Left cardiac atrium (tissue), 4 donors: ENCODE measurements at regions of chr6 and their contacts with region 1.

Region 1: DNA sequence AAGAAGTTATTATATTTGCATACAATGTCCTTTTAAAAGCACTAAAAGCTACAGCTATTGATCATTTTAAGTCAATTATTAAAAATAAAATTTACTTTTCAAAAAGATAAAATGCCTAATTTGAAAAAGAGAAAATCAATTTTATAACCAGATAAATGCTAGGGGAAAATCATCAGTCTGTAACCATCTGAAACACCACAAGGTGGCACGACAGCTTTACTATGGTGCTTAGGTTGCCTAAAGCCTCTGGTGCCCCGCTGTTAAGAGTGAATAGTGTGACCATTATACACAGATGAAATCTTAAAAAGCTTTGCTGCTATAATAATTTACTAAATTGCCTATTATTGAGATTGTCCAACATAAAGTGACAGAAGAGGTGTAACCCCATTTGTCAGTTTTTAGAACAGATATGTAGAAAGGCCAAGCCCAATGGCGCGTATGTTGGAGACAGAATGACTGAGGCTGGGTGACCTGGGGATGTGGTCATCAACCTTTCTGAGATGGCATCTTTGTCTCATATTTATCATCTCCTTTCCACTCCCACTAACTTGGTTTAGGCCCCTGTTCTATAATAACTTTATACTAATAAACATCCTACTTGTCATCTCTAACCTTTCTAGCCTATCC is 100.8 kb downstream of the MOXD1 start:
- DNase-seq: peak; percentile 28
- ATAC-seq: peak; percentile 74 to 78

Region 2: DNA sequence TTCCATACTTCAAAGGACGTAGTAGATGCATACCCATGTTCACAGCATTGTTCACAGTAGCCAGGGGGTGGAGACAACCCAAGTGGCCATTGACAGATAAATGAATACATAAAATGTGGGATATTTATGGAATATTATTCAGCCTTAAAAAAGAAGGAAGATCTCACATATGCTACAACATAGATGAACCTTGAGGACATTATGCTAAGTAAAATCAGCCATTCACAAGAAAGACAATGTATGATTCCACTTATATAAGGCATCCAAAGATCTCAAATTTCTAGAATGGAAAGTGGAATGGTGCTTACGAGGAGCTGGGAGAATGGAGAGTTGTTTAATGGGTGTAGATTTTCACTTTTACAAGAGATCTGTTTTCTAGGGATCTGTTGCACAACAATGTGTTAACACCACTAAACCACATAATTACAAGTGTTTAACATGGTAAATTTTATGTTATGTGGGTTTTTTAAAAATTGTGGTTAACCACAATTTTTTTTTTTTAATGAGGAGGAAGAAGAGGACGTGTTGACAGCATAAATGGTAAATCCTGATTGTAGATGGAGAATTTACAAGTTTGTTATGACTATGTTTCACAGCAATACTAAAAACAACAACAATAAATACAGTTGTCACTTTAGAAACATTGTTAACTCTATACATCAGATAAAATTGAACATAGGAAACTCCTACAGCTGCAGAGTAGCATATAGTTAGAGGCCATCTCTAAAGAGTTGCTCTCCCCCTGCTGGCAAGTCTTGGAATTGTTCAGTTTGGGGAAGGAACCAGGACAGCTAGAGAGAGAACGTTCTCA is 390.8 kb before region 1 on chr6:
- intact Hi-C with region 1: loop called in 1 of 2 experiments (anchors 10 kb)
- DNase-seq: peak; percentile 63
- ATAC-seq: peak; percentile 77 to 79

Region 3: DNA sequence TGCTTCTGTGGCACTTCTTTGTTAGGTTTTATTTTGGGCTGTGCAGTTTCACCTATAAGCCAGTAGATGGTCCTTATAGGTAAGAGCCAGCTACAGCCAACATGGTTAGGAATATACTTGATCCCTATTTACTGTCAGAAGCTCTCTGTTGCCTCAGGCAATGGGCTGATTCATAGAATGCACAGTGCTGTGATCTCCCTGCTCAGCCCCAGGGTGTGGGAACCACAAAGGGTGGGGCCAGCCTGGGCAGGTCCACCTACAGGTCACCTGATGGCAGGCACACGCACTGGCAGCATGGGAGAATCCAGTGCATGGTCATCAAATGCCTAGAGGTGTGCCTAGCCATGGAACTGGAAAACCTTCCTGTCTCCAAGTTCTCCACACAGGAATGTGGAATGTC is 91.1 kb before region 1 on chr6:
- intact Hi-C with region 1: no loop called
- DNase-seq: no peak
- ATAC-seq: no peak

Region 4: DNA sequence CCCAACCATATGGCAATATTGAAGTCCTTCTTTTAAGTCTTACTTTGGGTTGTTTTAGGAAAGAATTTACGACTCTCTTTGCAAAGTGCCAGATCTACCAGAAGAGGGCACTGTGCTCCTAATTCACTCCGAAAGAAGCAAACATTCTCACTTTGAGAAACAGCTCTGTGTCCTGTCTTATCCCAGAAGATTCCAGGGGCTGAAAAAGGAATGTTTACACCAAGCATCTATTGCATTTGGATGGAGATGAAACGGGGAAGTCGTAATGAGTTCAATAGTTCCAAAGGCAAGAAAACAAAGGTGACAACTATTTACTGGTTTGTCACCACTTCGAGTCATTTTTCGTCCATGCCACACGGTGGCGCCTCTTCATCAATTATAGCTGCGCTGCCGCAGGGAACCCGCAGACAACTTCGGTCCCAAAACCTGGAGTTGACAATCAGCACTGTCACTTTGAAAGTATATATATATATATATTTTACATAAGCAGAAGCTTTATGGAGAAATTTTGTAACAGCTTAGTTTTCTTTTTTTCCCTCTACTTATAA is 20.8 kb before region 1 on chr6:
- intact Hi-C with region 1: loop called in 1 of 2 experiments (anchors 2 kb)
- DNase-seq: peak; percentile 71
- ATAC-seq: peak; percentile 72 to 82

Region 5: GRCh38 chr6:132456700-132457143 is 156.3 kb after region 1 on chr6:
- intact Hi-C with region 1: loop called in 1 of 2 experiments (anchors 10 kb)
- DNase-seq: peak; percentile 58
- ATAC-seq: peak; percentile 90 to 95

Region 6: GRCh38 chr6:132483779-132484679 is 183.6 kb after region 1 on chr6:
- intact Hi-C with region 1: loop called (anchors 2 to 5 kb)
- DNase-seq: no peak
- ATAC-seq: peak; percentile 65 to 79

Region 7: GRCh38 chr6:132598473-132598872 is 298.0 kb after region 1 on chr6:
- intact Hi-C with region 1: no loop called
- DNase-seq: no peak
- ATAC-seq: no peak